ENCODE measurements at regions of chr17 and their contacts with region 1.

Region 1: DNA sequence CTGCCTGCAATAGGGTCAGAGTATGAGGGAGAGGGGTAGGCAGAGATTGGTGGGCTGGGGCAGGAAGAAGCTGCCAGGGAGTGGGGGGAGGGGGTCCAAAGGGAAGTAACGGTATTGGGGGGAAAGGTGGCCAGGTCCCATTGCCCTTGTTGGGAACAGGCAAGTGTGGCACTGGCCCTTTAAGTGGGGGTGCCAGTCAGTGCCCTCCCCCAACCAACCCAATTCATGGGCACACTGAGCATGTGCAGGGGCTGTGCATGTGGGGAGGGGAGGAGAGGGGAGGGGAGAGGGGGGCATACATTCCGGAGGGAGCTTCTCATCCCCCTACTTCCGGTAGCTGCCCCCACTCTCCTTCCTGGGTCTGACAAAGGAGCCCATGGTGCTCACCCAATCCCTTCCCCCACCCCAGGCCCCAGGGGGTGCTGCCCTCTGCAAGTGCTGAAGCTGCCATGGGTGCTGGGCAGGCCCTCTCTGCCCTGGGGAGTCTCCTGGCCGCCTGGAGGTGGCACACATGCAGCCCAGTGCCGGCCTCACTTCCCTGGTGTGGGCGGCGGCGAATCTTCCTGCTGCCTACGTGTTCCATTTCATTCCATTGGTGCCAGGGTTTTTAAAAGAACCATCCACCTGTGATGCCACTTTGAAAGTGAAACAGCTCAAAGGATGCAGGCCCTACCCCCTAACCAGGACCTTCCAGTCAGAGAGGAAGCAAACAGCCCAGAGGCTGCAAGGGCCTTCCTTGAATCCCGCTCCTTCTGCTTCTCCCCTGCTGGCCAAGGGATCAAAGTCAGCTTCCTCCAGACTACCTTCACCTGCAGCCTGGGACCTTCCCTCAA is 11.0 kb downstream of the HEXIM2 start:
- DNase-seq: peak; percentile 97
- H3K4me3 ChIP-seq: peak overlapping the region; percentile 60
- H3K27ac ChIP-seq: peak overlapping the region; percentile 95
- H3K4me1 ChIP-seq: peaks cover 93% of the 10 kb centered on the region
- H3K27me3 ChIP-seq: no peaks in the 10 kb centered on the region
- CTCF ChIP-seq: no peak; the same call in 1 of the 2 replicates

Region 2: GRCh38 chr17:45155029-45155428 is 17.6 kb before region 1 on chr17:
- CTCF ChIA-PET with region 1: interaction called, 32 read pairs
- POLR2A ChIA-PET with region 1: interaction called, 31 read pairs
- intact Hi-C with region 1: no loop called
- DNase-seq: peak in 1 of 2 experiments; percentile 74
- H3K4me3 ChIP-seq: peak overlapping the region; percentile 36; the same call in 1 of the 2 replicates
- H3K27ac ChIP-seq: peak overlapping the region; percentile 75
- H3K4me1 ChIP-seq: peaks cover 72% of the 10 kb centered on the region
- H3K27me3 ChIP-seq: no peaks in the 10 kb centered on the region
- CTCF ChIP-seq: 0 out of 2 replicates have a peak, but pooled peaks have one; percentile 21

Region 3: GRCh38 chr17:45161019-45161825 is 11.4 kb before region 1 on chr17:
- CTCF ChIA-PET with region 1: interaction called, 5 read pairs
- POLR2A ChIA-PET with region 1: interaction called, 100 read pairs
- intact Hi-C with region 1: loop called (anchors 1 kb)
- DNase-seq: peak; percentile 98 to 99
- H3K4me3 ChIP-seq: peak overlapping the region; percentile 73
- H3K27ac ChIP-seq: peak overlapping the region; percentile 93
- H3K4me1 ChIP-seq: peaks cover 55% of the 10 kb centered on the region
- H3K27me3 ChIP-seq: no peaks in the 10 kb centered on the region
- CTCF ChIP-seq: no peak; the same call in 1 of the 2 replicates

Region 4: GRCh38 chr17:45184144-45184543 is 11.5 kb after region 1 on chr17:
- CTCF ChIA-PET with region 1: interaction called, 8 read pairs
- POLR2A ChIA-PET with region 1: interaction called, 16 read pairs
- intact Hi-C with region 1: no loop called
- DNase-seq: no peak
- H3K4me3 ChIP-seq: no peak overlapping the region
- H3K27ac ChIP-seq: peak overlapping the region; percentile 37
- H3K4me1 ChIP-seq: peaks cover 15% of the 10 kb centered on the region
- H3K27me3 ChIP-seq: no peaks in the 10 kb centered on the region
- CTCF ChIP-seq: no peak

Region 5: DNA sequence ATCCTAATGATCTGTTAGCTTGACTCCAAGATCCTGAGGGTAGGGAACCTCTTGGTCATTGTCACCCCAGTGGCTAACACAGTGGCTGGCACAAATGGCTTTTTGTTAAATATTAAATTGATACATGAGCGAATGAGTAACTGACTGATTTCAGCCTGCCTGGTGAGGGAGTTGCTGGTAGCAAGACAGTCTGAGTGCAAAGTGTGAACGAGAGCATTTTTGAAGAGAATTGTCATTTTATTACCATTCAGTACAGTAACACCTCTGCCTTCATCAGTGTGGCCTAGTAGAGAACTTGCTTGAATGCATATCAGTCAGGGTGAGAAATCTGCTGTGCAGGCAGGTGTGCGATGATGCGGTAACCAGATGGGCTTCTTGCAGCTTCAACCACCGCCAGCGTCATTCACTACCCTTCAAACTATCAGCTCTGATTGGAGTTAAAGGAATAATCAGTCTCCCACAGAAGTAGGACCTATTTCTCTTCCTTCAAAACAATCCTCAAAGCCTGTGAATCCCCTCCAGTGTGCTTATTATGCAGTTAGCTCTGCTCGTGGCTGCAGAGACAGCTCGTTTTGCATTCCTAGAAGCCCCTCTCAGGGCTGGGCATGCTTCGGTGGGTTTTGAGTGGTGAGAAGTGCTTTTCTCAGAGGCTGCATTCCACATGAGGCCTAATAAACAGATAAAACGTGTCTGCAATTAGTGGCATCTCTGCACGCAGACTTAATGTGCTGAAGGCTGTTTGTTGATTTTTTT is 18.0 kb after region 1 on chr17:
- CTCF ChIA-PET with region 1: no interaction called
- POLR2A ChIA-PET with region 1: interaction called, 16 read pairs
- intact Hi-C with region 1: no loop called
- DNase-seq: no peak
- H3K4me3 ChIP-seq: no peak overlapping the region
- H3K27ac ChIP-seq: no peak overlapping the region
- H3K4me1 ChIP-seq: no peaks in the 10 kb centered on the region
- H3K27me3 ChIP-seq: no peaks in the 10 kb centered on the region
- CTCF ChIP-seq: no peak

Region 6: DNA sequence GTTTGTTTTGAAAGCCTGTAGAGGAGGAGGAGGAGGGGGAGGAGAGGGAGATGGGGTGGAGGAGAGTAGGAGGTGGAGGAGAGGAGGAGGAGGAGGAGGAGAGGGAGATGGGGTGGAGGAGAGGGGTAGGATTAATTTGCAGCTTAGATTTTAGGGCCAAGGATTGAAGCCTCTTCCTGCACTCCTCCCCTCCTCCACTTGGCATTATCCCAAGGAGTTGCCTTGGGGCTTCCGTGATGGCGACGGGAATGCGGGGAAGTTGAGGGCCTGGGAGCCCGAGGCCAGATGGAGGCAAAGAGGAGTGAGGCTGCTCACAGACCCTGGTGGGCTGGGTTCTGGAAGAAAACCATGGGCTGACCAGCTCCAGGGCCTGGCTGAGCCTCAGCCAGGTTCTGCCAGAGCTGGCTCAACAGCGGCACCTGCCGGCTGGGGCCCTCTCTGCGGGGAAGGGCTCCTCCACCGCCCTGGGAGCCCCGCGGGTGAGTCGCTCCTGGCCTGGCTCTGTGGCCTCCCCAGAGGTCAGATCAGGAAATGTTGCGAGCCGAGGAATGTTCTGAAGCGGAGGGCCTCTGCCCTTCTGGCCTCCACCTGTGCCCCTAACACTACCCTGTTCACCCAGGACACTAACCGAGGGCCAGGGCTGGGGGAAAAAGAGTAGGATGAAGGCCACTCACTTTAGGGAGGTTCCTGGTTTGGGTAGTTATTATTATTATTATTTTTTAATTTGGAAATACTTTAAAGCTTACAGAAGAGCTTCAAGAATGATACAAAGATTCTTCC is 25.1 kb after region 1 on chr17:
- CTCF ChIA-PET with region 1: interaction called, 10 read pairs
- POLR2A ChIA-PET with region 1: interaction called, 15 read pairs
- intact Hi-C with region 1: loop called (anchors 1 kb)
- DNase-seq: peak; percentile 83 to 97
- H3K4me3 ChIP-seq: no peak overlapping the region
- H3K27ac ChIP-seq: peak overlapping the region; percentile 52
- H3K4me1 ChIP-seq: peaks cover 36% of the 10 kb centered on the region
- H3K27me3 ChIP-seq: no peaks in the 10 kb centered on the region
- CTCF ChIP-seq: peak; percentile 99